ENCODE measurements at regions of chr2 and their contacts with region 1.

Region 1: GRCh38 chr2:219104107-219105035 is 43.6 kb upstream of the IHH start:
- DNase-seq: no peak
- ATAC-seq: peak; percentile 97
- H3K4me3 ChIP-seq: no peak overlapping the region
- H3K27ac ChIP-seq: no peak overlapping the region
- H3K4me1 ChIP-seq: no peaks in the 10 kb centered on the region
- H3K27me3 ChIP-seq: no peaks in the 10 kb centered on the region
- CTCF ChIP-seq: peak; percentile 70 to 95 (median 90)
- EP300 ChIP-seq: no peak
- POLR2A ChIP-seq: no peak
- RAD21 ChIP-seq: peak; percentile 54

Region 2: GRCh38 chr2:217289877-217290279 is 1814.5 kb before region 1 on chr2:
- CTCF ChIA-PET with region 1: no interaction called
- POLR2A ChIA-PET with region 1: no interaction called
- RAD21 ChIA-PET with region 1: no interaction called
- SMC1A ChIA-PET with region 1: no interaction called
- in situ Hi-C with region 1: no loop called
- intact Hi-C with region 1: no loop called
- DNase-seq: no peak
- ATAC-seq: no peak
- H3K4me3 ChIP-seq: no peak overlapping the region
- H3K27ac ChIP-seq: no peak overlapping the region
- H3K4me1 ChIP-seq: no peaks in the 10 kb centered on the region
- H3K27me3 ChIP-seq: no peaks in the 10 kb centered on the region
- CTCF ChIP-seq: no peak
- EP300 ChIP-seq: no peak
- POLR2A ChIP-seq: no peak
- RAD21 ChIP-seq: no peak

Region 3: DNA sequence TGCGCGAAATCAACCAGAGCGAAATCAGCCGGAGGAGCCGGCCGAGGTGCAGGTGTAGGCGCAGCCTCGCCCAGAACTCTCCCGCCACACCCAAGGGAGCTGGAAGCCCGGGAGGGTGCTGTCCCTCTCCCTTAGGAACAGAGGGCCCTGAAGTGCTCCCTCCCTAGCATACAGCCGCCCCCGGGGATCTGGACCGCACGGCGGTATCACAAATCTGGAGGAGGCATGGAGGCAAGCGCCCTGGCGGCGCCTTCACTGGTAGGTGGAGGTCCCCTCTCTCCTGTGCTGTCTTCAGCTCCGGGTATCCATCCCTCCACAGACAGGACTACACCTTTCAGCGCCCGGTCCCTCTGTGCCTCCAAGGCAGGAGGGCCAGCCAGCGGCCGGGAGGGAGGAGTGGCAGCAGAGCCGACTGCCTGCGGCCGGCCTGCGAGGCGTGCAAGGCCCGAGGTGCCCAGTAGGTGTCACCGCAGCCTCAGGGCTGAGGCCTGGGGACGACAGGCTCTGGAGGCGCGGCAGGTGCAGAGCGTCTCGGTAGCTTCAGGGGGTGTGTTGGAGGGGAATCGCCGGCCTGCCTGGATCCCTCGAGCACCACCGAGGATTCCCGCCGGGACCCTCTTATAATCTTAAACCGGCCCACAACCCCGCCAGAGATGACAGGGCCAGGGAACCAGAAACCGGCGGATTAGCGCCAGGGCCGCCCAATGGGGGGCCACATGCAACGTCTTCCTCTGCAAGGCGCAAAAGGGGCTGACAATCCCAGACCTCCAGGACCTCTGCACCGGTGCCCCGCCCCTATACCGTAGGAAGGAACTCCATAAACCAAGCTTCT is 46.4 kb before region 1 on chr2:
- CTCF ChIA-PET with region 1: interaction called, 8 read pairs
- POLR2A ChIA-PET with region 1: no interaction called
- RAD21 ChIA-PET with region 1: interaction called, 6 read pairs
- SMC1A ChIA-PET with region 1: interaction called, 5 read pairs
- in situ Hi-C with region 1: no loop called
- intact Hi-C with region 1: loop called (anchors 5 kb)
- DNase-seq: no peak
- ATAC-seq: peak; percentile 99
- H3K4me3 ChIP-seq: no peak overlapping the region
- H3K27ac ChIP-seq: no peak overlapping the region
- H3K4me1 ChIP-seq: no peaks in the 10 kb centered on the region
- H3K27me3 ChIP-seq: peaks cover 23 to 26% of the 10 kb centered on the region in 2 experiments
- CTCF ChIP-seq: peak; percentile 80 to 93 (median 82)
- EP300 ChIP-seq: no peak
- POLR2A ChIP-seq: no peak
- RAD21 ChIP-seq: peak; percentile 84

Region 4: GRCh38 chr2:219065484-219065883 is 38.9 kb before region 1 on chr2:
- CTCF ChIA-PET with region 1: interaction called, 365 read pairs
- POLR2A ChIA-PET with region 1: no interaction called
- RAD21 ChIA-PET with region 1: no interaction called
- SMC1A ChIA-PET with region 1: interaction called, 57 read pairs
- in situ Hi-C with region 1: no loop called
- intact Hi-C with region 1: loop called (anchors 5 kb)
- DNase-seq: no peak
- ATAC-seq: no peak
- H3K4me3 ChIP-seq: no peak overlapping the region
- H3K27ac ChIP-seq: no peak overlapping the region
- H3K4me1 ChIP-seq: no peaks in the 10 kb centered on the region
- H3K27me3 ChIP-seq: peaks cover 2 to 7% of the 10 kb centered on the region in 2 experiments; a peak in 2 of 4 replicates
- CTCF ChIP-seq: no peak
- EP300 ChIP-seq: no peak
- POLR2A ChIP-seq: no peak
- RAD21 ChIP-seq: no peak

Region 5: GRCh38 chr2:219079417-219079816 is 25.0 kb before region 1 on chr2:
- CTCF ChIA-PET with region 1: interaction called, 365 read pairs
- POLR2A ChIA-PET with region 1: interaction called, 3 read pairs
- RAD21 ChIA-PET with region 1: interaction called, 56 read pairs
- SMC1A ChIA-PET with region 1: interaction called, 57 read pairs
- in situ Hi-C with region 1: no loop called
- intact Hi-C with region 1: no loop called
- DNase-seq: no peak
- ATAC-seq: no peak
- H3K4me3 ChIP-seq: no peak overlapping the region
- H3K27ac ChIP-seq: no peak overlapping the region
- H3K4me1 ChIP-seq: peaks cover 6% of the 10 kb centered on the region
- H3K27me3 ChIP-seq: no peaks in the 10 kb centered on the region
- CTCF ChIP-seq: no peak
- EP300 ChIP-seq: no peak
- POLR2A ChIP-seq: no peak
- RAD21 ChIP-seq: no peak

Region 6: GRCh38 chr2:219155054-219155644 is 50.8 kb after region 1 on chr2:
- CTCF ChIA-PET with region 1: interaction called, 17 read pairs
- POLR2A ChIA-PET with region 1: no interaction called
- RAD21 ChIA-PET with region 1: interaction called, 11 read pairs
- SMC1A ChIA-PET with region 1: interaction called, 11 read pairs
- in situ Hi-C with region 1: no loop called
- intact Hi-C with region 1: no loop called
- DNase-seq: no peak
- ATAC-seq: peak; percentile 77
- H3K4me3 ChIP-seq: no peak overlapping the region
- H3K27ac ChIP-seq: no peak overlapping the region
- H3K4me1 ChIP-seq: peaks cover 4% of the 10 kb centered on the region; the same call in 1 of the 2 replicates
- H3K27me3 ChIP-seq: no peaks in the 10 kb centered on the region
- CTCF ChIP-seq: peak; percentile 37 to 66 (median 39); a peak in 5 of 6 replicates
- EP300 ChIP-seq: no peak
- POLR2A ChIP-seq: no peak
- RAD21 ChIP-seq: peak; percentile 78

Region 7: GRCh38 chr2:219243291-219243761 is 139.0 kb after region 1 on chr2:
- CTCF ChIA-PET with region 1: no interaction called
- POLR2A ChIA-PET with region 1: no interaction called
- RAD21 ChIA-PET with region 1: no interaction called
- SMC1A ChIA-PET with region 1: no interaction called
- in situ Hi-C with region 1: no loop called
- intact Hi-C with region 1: no loop called
- DNase-seq: no peak
- ATAC-seq: no peak
- H3K4me3 ChIP-seq: no peak overlapping the region
- H3K27ac ChIP-seq: no peak overlapping the region
- H3K4me1 ChIP-seq: peaks cover 28% of the 10 kb centered on the region
- H3K27me3 ChIP-seq: no peaks in the 10 kb centered on the region
- CTCF ChIP-seq: no peak
- EP300 ChIP-seq: no peak
- POLR2A ChIP-seq: no peak
- RAD21 ChIP-seq: no peak

Measured in GM12878 (cell line).